ENCODE measurements at regions of chr6 and their contacts with region 1.

Region 1: DNA sequence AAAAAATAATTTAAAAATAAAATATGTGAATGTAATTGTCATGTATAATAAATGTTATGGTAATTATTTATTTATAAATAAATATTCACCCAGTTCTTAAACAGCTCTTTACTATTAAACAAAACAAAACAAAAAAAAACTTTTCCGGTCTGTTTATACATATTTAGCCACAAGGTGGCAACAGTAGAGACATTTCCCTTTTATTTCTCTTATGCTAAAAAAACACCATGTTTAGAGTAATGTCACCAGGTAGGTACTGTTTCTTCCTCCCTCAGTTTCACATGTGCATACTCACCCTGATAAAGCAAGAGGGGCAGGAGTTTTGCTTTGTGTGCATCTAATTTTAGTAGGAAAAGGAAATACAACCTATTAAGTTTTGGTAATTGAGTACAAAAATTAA is 610.4 kb upstream of the IMPG1 start:
- DNase-seq: no peak
- ATAC-seq: no peak
- H3K4me3 ChIP-seq: no peak overlapping the region
- H3K27ac ChIP-seq: no peak overlapping the region
- H3K4me1 ChIP-seq: no peaks in the 10 kb centered on the region
- H3K27me3 ChIP-seq: no peaks in the 10 kb centered on the region
- CTCF ChIP-seq: peak in 11 of 12 donors; percentile 23 to 54 (median 41)
- POLR2A ChIP-seq: no peak

Region 2: GRCh38 chr6:76831299-76831698 is 148.5 kb after region 1 on chr6:
- intact Hi-C with region 1: no loop called
- DNase-seq: no peak
- ATAC-seq: no peak
- H3K4me3 ChIP-seq: no peak overlapping the region
- H3K27ac ChIP-seq: no peak overlapping the region
- H3K4me1 ChIP-seq: no peaks in the 10 kb centered on the region
- H3K27me3 ChIP-seq: no peaks in the 10 kb centered on the region
- CTCF ChIP-seq: no peak
- POLR2A ChIP-seq: no peak

Region 3: DNA sequence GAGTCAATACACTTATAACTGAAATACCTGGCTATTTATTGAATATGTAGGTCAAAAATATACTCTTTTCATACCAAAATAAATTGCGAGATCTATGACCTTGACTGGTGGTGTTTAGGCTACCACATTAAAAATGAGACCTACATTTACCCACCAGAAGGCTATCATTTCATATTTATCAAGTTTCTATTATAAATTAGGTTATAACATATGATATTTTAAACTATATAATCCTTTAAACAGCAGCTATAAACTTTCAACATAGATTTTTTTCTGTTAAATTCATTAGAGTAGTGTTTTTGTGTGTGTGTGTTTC is 194.4 kb after region 1 on chr6:
- intact Hi-C with region 1: loop called in 2 of 10 experiments (anchors 5 to 10 kb)
- DNase-seq: no peak
- ATAC-seq: no peak
- H3K4me3 ChIP-seq: no peak overlapping the region
- H3K27ac ChIP-seq: no peak overlapping the region
- H3K4me1 ChIP-seq: no peaks in the 10 kb centered on the region
- H3K27me3 ChIP-seq: no peaks in the 10 kb centered on the region
- CTCF ChIP-seq: no peak
- POLR2A ChIP-seq: no peak

Measured in heart left ventricle (tissue), 16 donors.